H1 (cell line): ENCODE measurements at regions of chr7 and their contacts with region 1.

Region 1: GRCh38 chr7:131753620-131754222 is 197.3 kb upstream of the PODXL start:
- DNase-seq: peak; percentile 21 to 66
- H3K4me3 ChIP-seq: no peak overlapping the region
- H3K27ac ChIP-seq: no peak overlapping the region
- H3K4me1 ChIP-seq: no peaks in the 10 kb centered on the region
- H3K27me3 ChIP-seq: no peaks in the 10 kb centered on the region
- CTCF ChIP-seq: peak; percentile 65 to 79 (median 76)
- EP300 ChIP-seq: no peak
- POLR2A ChIP-seq: no peak
- RAD21 ChIP-seq: peak; percentile 64 to 67

Region 2: DNA sequence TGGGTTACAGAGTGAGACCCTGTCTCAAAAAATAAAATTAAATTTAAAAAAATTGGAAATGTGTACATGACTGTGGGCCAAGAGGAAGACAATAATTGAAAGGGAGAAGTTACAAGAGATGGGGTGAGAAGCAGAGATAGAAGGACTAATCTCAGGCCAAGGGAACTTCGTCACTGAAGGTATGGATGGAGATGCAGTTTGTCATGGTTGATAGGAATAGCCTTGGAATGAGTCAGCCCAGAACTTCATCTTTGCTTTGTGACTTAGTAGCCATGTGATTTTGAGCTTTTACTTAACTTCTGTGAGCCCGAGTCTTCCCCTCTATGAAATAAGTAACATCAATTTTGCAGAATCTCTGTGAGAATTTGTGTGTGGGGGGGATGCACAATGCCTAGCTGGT is 190.8 kb before region 1 on chr7:
- CTCF ChIA-PET with region 1: no interaction called
- POLR2A ChIA-PET with region 1: no interaction called
- DNase-seq: no peak
- H3K4me3 ChIP-seq: no peak overlapping the region
- H3K27ac ChIP-seq: no peak overlapping the region
- H3K4me1 ChIP-seq: peaks cover 4 to 8% (median 4%) of the 10 kb centered on the region in 4 experiments; a peak in 6 of 7 replicates
- H3K27me3 ChIP-seq: no peaks in the 10 kb centered on the region
- CTCF ChIP-seq: no peak
- EP300 ChIP-seq: no peak
- POLR2A ChIP-seq: no peak
- RAD21 ChIP-seq: no peak

Region 3: DNA sequence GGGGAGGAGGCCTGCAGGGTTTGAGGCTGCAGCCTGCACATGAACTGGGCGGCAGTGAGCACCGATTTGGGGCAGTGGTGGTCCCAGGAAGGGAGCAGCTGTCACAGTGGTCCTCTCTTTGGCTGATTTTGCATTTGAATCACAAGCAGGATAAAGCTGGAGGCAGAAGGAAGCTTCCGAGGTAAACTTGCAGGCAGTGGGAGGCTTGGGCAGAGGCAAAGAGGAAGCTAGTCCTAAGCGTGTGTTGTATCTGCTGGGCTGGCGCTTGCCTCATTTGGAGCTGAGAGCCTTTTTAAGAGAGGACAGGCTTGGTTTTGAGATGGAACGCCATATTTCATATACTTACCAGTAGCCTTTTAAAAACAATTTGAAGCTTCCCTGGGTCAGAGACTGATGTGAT is 20.1 kb before region 1 on chr7:
- CTCF ChIA-PET with region 1: no interaction called
- POLR2A ChIA-PET with region 1: no interaction called
- DNase-seq: no peak
- H3K4me3 ChIP-seq: no peak overlapping the region
- H3K27ac ChIP-seq: no peak overlapping the region
- H3K4me1 ChIP-seq: peaks cover 0 to 7% (median 0%) of the 10 kb centered on the region in 4 experiments; a peak in 2 of 7 replicates
- H3K27me3 ChIP-seq: no peaks in the 10 kb centered on the region
- CTCF ChIP-seq: no peak
- EP300 ChIP-seq: no peak
- POLR2A ChIP-seq: no peak
- RAD21 ChIP-seq: no peak

Region 4: GRCh38 chr7:131843898-131844331 is 90.2 kb after region 1 on chr7:
- CTCF ChIA-PET with region 1: interaction called, 13 read pairs
- POLR2A ChIA-PET with region 1: no interaction called
- DNase-seq: no peak
- H3K4me3 ChIP-seq: no peak overlapping the region
- H3K27ac ChIP-seq: no peak overlapping the region
- H3K4me1 ChIP-seq: 0 out of 7 replicates have a peak, but pooled peaks cover 0 to 2% (median 0%) of the 10 kb centered on the region in 4 experiments
- H3K27me3 ChIP-seq: no peaks in the 10 kb centered on the region; a peak in 1 of 7 replicates
- CTCF ChIP-seq: no peak
- EP300 ChIP-seq: no peak
- POLR2A ChIP-seq: no peak
- RAD21 ChIP-seq: no peak